ENCODE measurements at regions of chr16 and their contacts with region 1.

Region 1: DNA sequence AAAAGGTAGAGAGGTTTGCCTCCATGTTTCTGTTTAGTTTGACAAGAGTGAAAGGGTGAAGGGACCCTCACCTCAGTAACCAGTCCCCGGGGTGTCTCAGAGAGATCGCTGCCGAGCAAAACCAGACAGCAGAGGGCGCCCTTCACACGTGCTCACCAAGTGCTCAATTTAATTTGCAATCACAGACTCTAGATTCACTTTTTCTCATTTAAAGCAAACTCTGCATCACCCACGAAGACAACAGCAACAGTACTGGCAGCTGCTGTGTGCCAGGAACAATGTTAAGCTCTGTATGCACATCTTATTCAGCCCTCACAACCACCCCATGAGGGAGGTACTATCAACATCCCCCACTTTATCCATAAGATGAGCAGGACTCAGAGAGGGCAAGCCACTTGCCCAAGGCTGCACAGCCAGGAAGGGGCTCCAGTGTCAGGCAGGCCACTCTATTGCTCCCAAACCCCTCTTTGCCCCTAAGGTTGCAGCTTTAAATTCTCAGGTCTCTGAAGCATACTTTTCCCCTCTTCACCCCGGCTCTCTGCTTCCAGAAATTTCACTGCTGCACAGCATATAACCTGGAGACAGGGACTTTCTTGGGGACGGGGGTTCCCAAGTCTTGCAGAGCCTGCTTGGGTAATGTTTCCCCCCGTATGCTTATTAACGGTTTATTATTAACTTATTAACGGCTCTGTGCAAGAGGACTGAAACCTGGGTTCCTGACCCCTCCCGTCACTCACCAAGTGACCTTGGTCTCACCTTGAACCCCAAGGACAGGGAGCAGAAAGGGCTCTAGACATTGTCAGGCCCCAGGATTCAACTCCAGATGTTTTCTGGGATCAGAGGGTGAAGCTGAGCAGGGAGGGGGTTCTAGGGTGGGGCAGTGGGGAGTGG is 70.9 kb downstream of the CNGB1 start:
- DNase-seq: peak; percentile 73
- H3K4me3 Mint-ChIP-seq: no peak overlapping the region
- H3K27ac Mint-ChIP-seq: no peak overlapping the region
- H3K4me1 Mint-ChIP-seq: peaks cover 6% of the 10 kb centered on the region
- H3K27me3 Mint-ChIP-seq: no peaks in the 10 kb centered on the region
- CTCF ChIP-seq: peak; percentile 94

Region 2: GRCh38 chr16:57834936-57835335 is 65.1 kb before region 1 on chr16:
- CTCF ChIA-PET with region 1: no interaction called
- POLR2A ChIA-PET with region 1: no interaction called
- intact Hi-C with region 1: no loop called
- DNase-seq: peak; percentile 79
- H3K4me3 Mint-ChIP-seq: peak overlapping the region; percentile 25
- H3K27ac Mint-ChIP-seq: peak overlapping the region; percentile 75
- H3K4me1 Mint-ChIP-seq: peaks cover 8% of the 10 kb centered on the region
- H3K27me3 Mint-ChIP-seq: no peaks in the 10 kb centered on the region
- CTCF ChIP-seq: no peak

Region 3: GRCh38 chr16:57988929-57989328 is 88.9 kb after region 1 on chr16:
- CTCF ChIA-PET with region 1: interaction called, 11 read pairs
- POLR2A ChIA-PET with region 1: no interaction called
- intact Hi-C with region 1: no loop called
- DNase-seq: peak; percentile 55
- H3K4me3 Mint-ChIP-seq: no peak overlapping the region
- H3K27ac Mint-ChIP-seq: peak overlapping the region; percentile 60
- H3K4me1 Mint-ChIP-seq: peaks cover 17% of the 10 kb centered on the region
- H3K27me3 Mint-ChIP-seq: no peaks in the 10 kb centered on the region
- CTCF ChIP-seq: no peak

Region 4: DNA sequence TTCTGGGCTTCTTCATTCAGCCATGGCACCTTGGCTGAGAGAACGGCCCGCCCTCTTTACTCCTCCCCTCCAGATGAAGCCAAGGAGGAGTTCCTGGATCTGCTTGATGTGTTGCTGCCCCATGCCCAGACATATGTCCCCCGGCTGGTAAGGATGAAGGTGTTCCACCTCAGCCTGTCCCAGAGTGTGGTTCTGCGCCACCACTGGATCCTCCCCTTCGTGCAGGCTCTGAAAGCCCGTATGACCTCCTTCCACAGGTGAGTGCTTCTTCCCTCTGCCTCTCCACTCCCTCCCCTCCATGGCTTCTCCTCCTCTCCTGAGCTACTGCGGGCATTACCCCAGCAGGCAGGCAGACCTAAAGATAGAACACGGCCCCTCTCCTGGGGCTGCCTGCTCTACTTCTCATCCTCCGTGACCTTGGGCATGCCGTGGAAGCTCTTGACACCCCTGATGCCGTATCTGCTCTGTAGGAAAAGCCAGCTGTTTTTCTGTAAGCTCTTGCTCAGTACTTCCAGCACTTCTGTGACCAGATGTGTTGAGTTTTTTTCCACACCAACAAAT is 109.9 kb after region 1 on chr16:
- CTCF ChIA-PET with region 1: interaction called, 70 read pairs
- POLR2A ChIA-PET with region 1: no interaction called
- intact Hi-C with region 1: loop called (anchors 1 kb)
- DNase-seq: no peak
- H3K4me3 Mint-ChIP-seq: no peak overlapping the region
- H3K27ac Mint-ChIP-seq: no peak overlapping the region
- H3K4me1 Mint-ChIP-seq: peaks cover 8% of the 10 kb centered on the region
- H3K27me3 Mint-ChIP-seq: no peaks in the 10 kb centered on the region
- CTCF ChIP-seq: no peak